ENCODE measurements at regions of chr9 and their contacts with region 1.

Region 1: DNA sequence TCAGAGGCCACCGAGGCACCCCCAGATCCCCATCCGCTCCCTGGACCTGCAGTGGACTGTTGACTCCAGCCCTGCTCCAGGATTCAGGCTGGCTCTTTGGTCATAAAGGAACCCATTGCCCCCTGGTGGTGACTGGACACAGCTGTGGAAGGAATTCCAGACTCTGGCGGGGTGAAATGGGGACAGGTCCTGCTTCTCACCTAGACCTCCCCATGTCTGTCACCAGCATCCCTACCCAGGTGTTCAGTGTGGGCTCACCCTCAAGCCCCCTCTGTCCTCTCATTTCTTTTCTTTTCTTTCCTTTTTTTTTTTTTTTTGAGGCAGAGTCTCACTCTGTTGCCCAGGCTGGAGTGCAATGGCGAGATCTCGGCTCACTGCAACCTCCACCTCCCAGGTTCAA is 25.5 kb upstream of the STXBP1 start:
- DNase-seq: peak in 2 of 4 donors; percentile 82 to 84
- ATAC-seq: peak; percentile 88
- H3K4me3 ChIP-seq: no peak overlapping the region
- H3K27ac ChIP-seq: no peak overlapping the region
- H3K4me1 ChIP-seq: peaks cover 5 to 40% of the 10 kb centered on the region in 2 donors
- H3K27me3 ChIP-seq: no peaks in the 10 kb centered on the region
- CTCF ChIP-seq: peak; percentile 76 to 82

Region 2: GRCh38 chr9:127505481-127506173 is 80.9 kb before region 1 on chr9:
- intact Hi-C with region 1: loop called in 1 of 2 experiments (anchors 5 kb)
- DNase-seq: peak in 1 of 4 donors; percentile 21
- ATAC-seq: peak; percentile 2
- H3K4me3 ChIP-seq: no peak overlapping the region
- H3K27ac ChIP-seq: no peak overlapping the region
- H3K4me1 ChIP-seq: no peaks in the 10 kb centered on the region
- H3K27me3 ChIP-seq: no peaks in the 10 kb centered on the region
- CTCF ChIP-seq: peak; percentile 15 to 21

Region 3: DNA sequence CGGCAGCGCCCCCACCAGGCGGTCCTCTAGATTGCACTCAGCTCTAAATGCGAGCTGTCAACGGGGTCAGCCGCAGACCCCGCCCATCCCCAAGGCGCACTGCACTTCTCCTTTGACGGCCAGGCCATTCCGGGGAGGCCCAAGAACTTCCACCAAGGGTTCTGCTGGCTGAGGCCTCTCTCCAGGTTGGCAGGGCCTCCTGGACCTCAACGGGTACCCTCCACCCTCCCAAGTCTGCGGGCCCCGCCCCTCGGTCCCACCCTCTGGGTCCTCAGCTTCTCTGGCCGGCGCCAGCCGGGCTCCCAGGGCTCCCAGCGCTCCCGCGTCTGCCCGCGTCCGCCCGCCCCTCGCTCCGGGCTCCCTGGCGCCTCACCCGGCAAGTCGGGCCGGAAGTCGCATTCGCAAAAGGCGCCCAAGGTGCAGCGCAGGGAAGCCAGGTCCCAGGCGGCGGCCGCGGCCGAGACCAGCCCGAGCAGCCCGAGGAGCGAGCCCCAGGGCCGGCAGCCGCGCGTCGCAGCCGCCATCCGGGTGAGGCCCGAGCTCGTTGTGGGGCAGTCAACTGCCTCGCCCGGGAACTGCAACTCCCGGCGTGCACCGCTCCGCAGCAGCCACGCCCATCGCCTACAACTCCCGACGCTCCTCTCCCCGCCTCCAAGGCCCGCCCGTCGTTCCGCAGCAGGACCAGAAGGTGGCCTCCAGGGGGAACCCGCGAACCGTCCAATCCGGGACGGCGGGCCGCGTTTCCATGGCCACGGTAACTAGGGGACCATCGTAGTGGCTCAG is 148.4 kb after region 1 on chr9 and contains the start of gene TOR2A:
- intact Hi-C with region 1: loop called in 1 of 2 experiments (anchors 5 kb)
- DNase-seq: peak; percentile 98 to 99 (median 98)
- ATAC-seq: peak; percentile 96
- H3K4me3 ChIP-seq: peak within 1 kb of the TSS; percentile 64 to 67
- H3K27ac ChIP-seq: peak within 1 kb of the TSS; percentile 91 to 96
- H3K4me1 ChIP-seq: peaks cover 6 to 29% of the 10 kb centered on the region in 2 donors
- H3K27me3 ChIP-seq: no peaks in the 10 kb centered on the region
- CTCF ChIP-seq: peak; percentile 95
- polyA plus RNA-seq, gene TOR2A: 10.6 to 16.4 (median 13.2) TPM

Region 4: GRCh38 chr9:127921557-127922120 is 335.1 kb after region 1 on chr9:
- intact Hi-C with region 1: loop called in 1 of 2 experiments (anchors 5 kb)
- DNase-seq: peak in 2 of 4 donors; percentile 81 to 93
- ATAC-seq: peak; percentile 43
- H3K4me3 ChIP-seq: no peak overlapping the region
- H3K27ac ChIP-seq: no peak overlapping the region
- H3K4me1 ChIP-seq: peaks cover 25 to 51% of the 10 kb centered on the region in 2 donors
- H3K27me3 ChIP-seq: peaks cover 0 to 22% of the 10 kb centered on the region in 2 donors
- CTCF ChIP-seq: peak; percentile 95 to 100